HAP-1 (cell line): ENCODE measurements at regions of chr1 and their contacts with region 1.

Region 1: DNA sequence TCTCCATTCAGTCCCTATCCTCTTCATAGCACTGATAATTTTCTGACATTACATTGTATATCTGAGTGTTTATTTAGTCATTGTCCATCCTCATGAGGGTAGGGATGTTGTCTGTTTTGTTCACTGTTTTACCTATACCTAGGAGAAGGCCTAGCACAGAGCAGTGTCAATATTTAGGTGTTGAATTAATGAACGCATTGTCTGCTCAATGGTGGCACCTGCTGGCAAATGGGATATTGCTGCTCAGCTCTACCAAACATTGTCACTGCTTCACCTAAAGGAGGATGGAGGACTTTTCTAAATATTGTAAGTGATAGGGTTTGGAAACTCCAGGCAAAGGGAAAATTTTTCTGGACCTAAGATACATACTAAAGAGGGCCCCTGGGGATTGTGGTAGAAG is 243.9 kb downstream of the RRAGC start:
- DNase-seq: no peak
- H3K4me3 ChIP-seq: no peak overlapping the region
- H3K4me1 ChIP-seq: no peaks in the 10 kb centered on the region
- H3K27me3 ChIP-seq: no peaks in the 10 kb centered on the region

Region 2: GRCh38 chr1:38818175-38818976 is 202.7 kb after region 1 on chr1:
- in situ Hi-C with region 1: loop called (anchors 10 kb)
- DNase-seq: peak; percentile 35 to 82
- H3K4me3 ChIP-seq: peak overlapping the region; percentile 33
- H3K4me1 ChIP-seq: no peaks in the 10 kb centered on the region; the same call in 1 of the 2 replicates
- H3K27me3 ChIP-seq: peaks cover 34% of the 10 kb centered on the region